ENCODE measurements at regions of chr21 and their contacts with region 1.

Region 1: GRCh38 chr21:23853796-23854379 is 1753.4 kb downstream of the MRPL39 start:
- DNase-seq: peak in 1 of 7 donors; percentile 19
- H3K4me3 ChIP-seq: no peak overlapping the region
- H3K27ac ChIP-seq: no peak overlapping the region
- H3K4me1 ChIP-seq: no peaks in the 10 kb centered on the region
- H3K27me3 ChIP-seq: no peaks in the 10 kb centered on the region
- CTCF ChIP-seq: peak; percentile 23 to 69 (median 58)
- POLR2A ChIP-seq: no peak

Region 2: GRCh38 chr21:23968722-23969647 is 115.1 kb after region 1 on chr21:
- intact Hi-C with region 1: loop called in 1 of 2 experiments (anchors 10 kb)
- DNase-seq: peak; percentile 27 to 69 (median 46)
- H3K4me3 ChIP-seq: no peak overlapping the region
- H3K27ac ChIP-seq: no peak overlapping the region
- H3K4me1 ChIP-seq: no peaks in the 10 kb centered on the region
- H3K27me3 ChIP-seq: no peaks in the 10 kb centered on the region
- CTCF ChIP-seq: peak; percentile 45 to 66 (median 56)
- POLR2A ChIP-seq: no peak

Region 3: DNA sequence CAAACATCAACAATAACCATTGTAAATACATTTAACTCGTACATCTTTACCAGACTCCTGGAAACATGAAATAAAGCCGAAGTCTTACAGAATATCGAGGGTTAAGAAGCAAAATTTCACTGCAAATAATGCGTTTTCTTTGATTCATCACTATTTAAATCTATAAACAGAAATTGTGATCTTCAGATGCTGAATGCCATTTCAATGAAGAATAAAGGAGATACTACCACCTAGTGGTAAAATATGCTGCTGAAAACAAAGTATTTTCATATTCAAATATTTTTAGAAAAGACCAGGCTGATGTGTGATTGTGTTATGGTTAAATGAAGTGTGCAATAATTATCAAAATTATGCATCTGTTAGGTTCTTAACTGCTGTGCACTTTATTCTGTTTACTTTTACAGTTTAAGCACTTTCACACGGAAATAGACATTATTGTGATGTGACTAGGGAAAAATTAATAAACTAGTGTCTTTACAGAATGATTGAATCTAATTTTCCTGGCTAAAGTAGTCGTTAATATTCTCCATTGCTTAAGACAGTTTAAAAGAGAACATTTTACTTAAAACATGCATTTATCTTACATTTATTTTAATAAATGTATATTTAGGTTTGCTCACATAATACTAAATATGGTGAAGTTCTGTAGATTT is 660.3 kb after region 1 on chr21:
- intact Hi-C with region 1: loop called in 1 of 2 experiments (anchors 10 kb)
- DNase-seq: no peak
- H3K4me3 ChIP-seq: no peak overlapping the region
- H3K27ac ChIP-seq: no peak overlapping the region
- H3K4me1 ChIP-seq: no peaks in the 10 kb centered on the region
- H3K27me3 ChIP-seq: no peaks in the 10 kb centered on the region
- CTCF ChIP-seq: peak; percentile 32 to 64 (median 54)
- POLR2A ChIP-seq: no peak